Endothelial cell of umbilical vein (primary cell): ENCODE measurements at regions of chrX and their contacts with region 1.

Region 1: DNA sequence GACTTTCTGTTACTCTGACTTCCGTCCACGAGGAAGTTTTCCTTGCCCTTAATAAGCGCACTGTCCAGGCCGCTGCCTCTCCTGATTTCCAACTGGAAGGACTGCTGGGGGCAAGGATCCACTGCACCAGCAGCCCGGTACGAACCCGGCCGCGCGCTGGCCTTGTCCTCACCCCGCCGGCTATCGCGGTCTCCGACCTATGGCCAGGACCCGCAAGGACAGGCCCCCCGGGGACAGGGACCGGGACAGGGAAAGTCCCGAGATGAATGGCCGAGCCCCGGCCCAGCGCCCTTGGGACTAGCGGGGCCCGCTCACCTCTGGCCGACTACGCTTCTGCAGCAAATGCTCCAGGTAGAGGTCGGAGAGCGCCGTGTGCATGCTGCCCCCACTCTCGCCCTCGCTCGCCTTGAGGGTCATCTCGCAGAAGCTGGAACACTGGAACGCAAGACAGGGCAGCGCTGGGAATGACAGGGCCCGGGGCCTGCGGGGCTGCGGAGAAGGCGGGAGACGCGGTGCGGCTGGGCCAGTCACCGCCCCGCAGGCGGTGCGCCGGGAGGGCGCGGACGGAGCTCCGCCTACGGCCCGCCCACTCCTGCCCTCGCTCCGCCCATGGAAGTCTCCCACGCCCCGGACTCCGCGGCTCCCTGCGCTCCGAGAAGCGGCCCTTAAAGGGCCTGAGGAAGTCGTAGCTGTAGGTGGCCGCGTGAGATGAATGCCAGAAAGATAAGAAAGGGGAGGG is at the start of gene MPP1:
- DNase-seq: peak; percentile 81
- H3K4me3 ChIP-seq: peak within 1 kb of the TSS; percentile 27 to 50 (median 50)
- H3K27ac ChIP-seq: peak within 1 kb of the TSS; percentile 7
- H3K4me1 ChIP-seq: peaks cover 31% of the 10 kb centered on the region
- H3K27me3 ChIP-seq: no peaks in the 10 kb centered on the region
- CTCF ChIP-seq: no peak
- POLR2A ChIP-seq: no peak
- total RNA-seq, gene MPP1: 27.0 and 32.3 TPM in 2 replicates

Region 2: GRCh38 chrX:154840856-154841255 is 35.7 kb after region 1 on chrX:
- CTCF ChIA-PET with region 1: interaction called, 6 read pairs
- POLR2A ChIA-PET with region 1: no interaction called
- dilution Hi-C with region 1: no loop called
- intact Hi-C with region 1: loop called (anchors 2 kb)
- DNase-seq: peak; percentile 64
- H3K4me3 ChIP-seq: no peak overlapping the region
- H3K27ac ChIP-seq: no peak overlapping the region
- H3K4me1 ChIP-seq: no peaks in the 10 kb centered on the region
- H3K27me3 ChIP-seq: no peaks in the 10 kb centered on the region
- CTCF ChIP-seq: peak; percentile 14 to 31
- POLR2A ChIP-seq: no peak

Region 3: DNA sequence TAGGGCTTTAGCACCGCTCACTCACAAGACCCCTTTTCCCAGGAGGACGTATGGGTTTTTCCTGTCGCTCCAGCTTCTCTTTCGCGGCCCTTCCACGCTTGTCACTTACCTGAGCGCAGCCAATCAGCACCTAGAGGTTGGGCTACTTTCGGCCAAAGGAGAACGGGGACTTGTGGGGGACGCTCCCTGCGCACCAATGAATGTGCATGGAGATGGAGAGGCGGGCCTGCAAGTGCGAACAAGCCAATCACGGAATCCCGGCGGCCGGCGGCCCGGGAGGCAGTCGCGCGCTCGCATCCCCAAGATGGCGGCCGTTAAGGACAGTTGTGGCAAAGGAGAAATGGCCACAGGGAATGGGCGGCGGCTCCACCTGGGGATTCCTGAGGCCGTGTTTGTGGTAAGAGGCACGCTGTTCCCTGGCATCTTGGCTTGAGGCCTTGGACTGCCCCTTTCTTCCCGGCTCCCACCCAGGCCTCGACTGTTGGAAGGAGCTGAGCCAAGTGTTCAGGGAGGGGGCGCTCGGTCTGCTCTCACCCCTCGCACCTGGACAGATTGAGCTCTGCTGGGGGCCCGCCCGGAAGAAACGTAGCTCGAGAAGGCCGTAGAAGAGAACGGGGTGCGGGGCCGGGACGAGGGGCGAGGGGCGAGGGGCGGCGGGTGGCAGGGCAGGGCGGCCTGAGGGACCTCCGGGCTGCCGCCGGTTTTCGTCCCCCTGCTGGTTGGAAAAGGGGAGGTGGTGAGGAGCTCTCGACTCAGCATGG is 411.2 kb after region 1 on chrX and contains the start of gene VBP1:
- CTCF ChIA-PET with region 1: no interaction called
- POLR2A ChIA-PET with region 1: no interaction called
- dilution Hi-C with region 1: no loop called
- intact Hi-C with region 1: no loop called
- DNase-seq: peak; percentile 95
- H3K4me3 ChIP-seq: peak within 1 kb of the TSS; percentile 79 to 97 (median 91)
- H3K27ac ChIP-seq: peak within 1 kb of the TSS; percentile 85
- H3K4me1 ChIP-seq: peaks cover 14% of the 10 kb centered on the region
- H3K27me3 ChIP-seq: no peaks in the 10 kb centered on the region
- CTCF ChIP-seq: peak; percentile 21 to 46
- POLR2A ChIP-seq: peak; percentile 51
- total RNA-seq, gene VBP1: 45.8 and 51.5 TPM in 2 replicates

Region 4: GRCh38 chrX:155293771-155294170 is 488.6 kb after region 1 on chrX:
- CTCF ChIA-PET with region 1: no interaction called
- POLR2A ChIA-PET with region 1: no interaction called
- dilution Hi-C with region 1: no loop called
- intact Hi-C with region 1: no loop called
- DNase-seq: no peak
- H3K4me3 ChIP-seq: no peak overlapping the region
- H3K27ac ChIP-seq: no peak overlapping the region
- H3K4me1 ChIP-seq: no peaks in the 10 kb centered on the region
- H3K27me3 ChIP-seq: no peaks in the 10 kb centered on the region
- CTCF ChIP-seq: no peak
- POLR2A ChIP-seq: no peak